GM12878 (cell line): ENCODE measurements at regions of chr3 and their contacts with region 1.

Region 1: GRCh38 chr3:94069194-94069813 is 6.4 kb downstream of the NSUN3 start:
- DNase-seq: no peak
- ATAC-seq: no peak
- H3K4me3 ChIP-seq: no peak overlapping the region
- H3K27ac ChIP-seq: peak overlapping the region; percentile 90; the same call in 1 of the 2 replicates
- H3K4me1 ChIP-seq: peaks cover 30% of the 10 kb centered on the region
- H3K27me3 ChIP-seq: no peaks in the 10 kb centered on the region
- CTCF ChIP-seq: peak in 2 of 3 experiments; percentile 18 to 34; a peak in 4 of 6 replicates
- EP300 ChIP-seq: no peak
- POLR2A ChIP-seq: no peak
- RAD21 ChIP-seq: peak; percentile 23; the same call in 1 of the 2 replicates

Region 2: DNA sequence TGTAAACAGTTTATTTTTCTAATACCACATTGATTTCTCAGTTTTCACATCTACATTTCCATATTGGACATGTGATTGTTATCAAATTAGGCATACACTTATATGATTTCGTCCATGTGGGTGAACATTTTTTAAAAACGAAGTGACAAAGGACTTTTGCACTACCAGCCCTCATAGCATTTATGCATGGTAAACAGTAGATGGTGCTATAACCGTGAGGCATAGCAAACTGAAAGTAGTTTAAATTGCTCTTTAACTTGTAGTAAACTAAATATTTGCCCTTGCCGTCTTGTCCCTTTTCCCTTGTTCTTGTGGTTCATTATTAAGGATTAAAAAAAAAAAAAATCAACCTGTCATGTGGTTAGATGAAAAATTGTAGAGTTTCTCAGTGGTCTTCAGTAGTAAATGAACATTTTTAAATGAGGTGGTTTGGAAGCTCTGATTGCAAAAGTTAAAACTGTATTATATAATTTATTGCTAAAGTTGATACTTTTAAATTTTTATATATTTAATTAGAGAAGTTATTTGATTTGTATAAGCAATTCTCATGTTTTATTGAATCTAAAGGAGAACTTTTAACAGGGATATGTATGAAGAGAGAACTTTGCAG is 64.9 kb before region 1 on chr3:
- CTCF ChIA-PET with region 1: interaction called, 164 read pairs
- POLR2A ChIA-PET with region 1: interaction called, 4 read pairs
- RAD21 ChIA-PET with region 1: interaction called, 21 read pairs
- SMC1A ChIA-PET with region 1: interaction called, 38 read pairs
- in situ Hi-C with region 1: loop called (anchors 5 kb)
- intact Hi-C with region 1: loop called (anchors 1 kb)
- DNase-seq: peak; percentile 44
- ATAC-seq: peak; percentile 92
- H3K4me3 ChIP-seq: no peak overlapping the region
- H3K27ac ChIP-seq: no peak overlapping the region; the same call in 1 of the 2 replicates
- H3K4me1 ChIP-seq: no peaks in the 10 kb centered on the region
- H3K27me3 ChIP-seq: no peaks in the 10 kb centered on the region
- CTCF ChIP-seq: peak; percentile 78 to 90 (median 84)
- EP300 ChIP-seq: no peak
- POLR2A ChIP-seq: no peak
- RAD21 ChIP-seq: peak; percentile 95

Region 3: DNA sequence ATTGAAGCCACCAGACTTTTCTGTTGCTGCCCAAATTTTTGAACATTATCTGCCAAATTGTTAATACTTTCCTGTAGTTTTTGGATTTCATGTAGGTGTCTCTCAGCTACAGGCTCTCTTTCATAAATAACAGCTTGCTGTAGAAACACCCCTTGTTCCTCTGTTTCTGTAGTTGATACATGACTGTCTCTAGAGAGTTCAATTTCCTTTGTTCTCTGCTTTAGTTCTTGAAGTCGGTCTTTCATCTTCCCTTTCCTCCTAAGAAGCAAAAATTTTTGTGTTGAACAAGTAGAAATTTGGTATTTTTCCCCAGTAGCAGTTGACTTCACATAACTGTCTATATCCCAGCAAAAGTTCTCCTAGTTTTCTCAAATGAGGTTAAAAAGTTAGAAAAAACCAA is 54.3 kb before region 1 on chr3:
- CTCF ChIA-PET with region 1: interaction called, 7 read pairs
- POLR2A ChIA-PET with region 1: no interaction called
- RAD21 ChIA-PET with region 1: interaction called, 6 read pairs
- SMC1A ChIA-PET with region 1: interaction called, 10 read pairs
- in situ Hi-C with region 1: no loop called
- intact Hi-C with region 1: no loop called
- DNase-seq: no peak
- ATAC-seq: no peak
- H3K4me3 ChIP-seq: no peak overlapping the region
- H3K27ac ChIP-seq: no peak overlapping the region
- H3K4me1 ChIP-seq: no peaks in the 10 kb centered on the region
- H3K27me3 ChIP-seq: no peaks in the 10 kb centered on the region
- CTCF ChIP-seq: no peak
- EP300 ChIP-seq: no peak
- POLR2A ChIP-seq: no peak
- RAD21 ChIP-seq: no peak

Region 4: DNA sequence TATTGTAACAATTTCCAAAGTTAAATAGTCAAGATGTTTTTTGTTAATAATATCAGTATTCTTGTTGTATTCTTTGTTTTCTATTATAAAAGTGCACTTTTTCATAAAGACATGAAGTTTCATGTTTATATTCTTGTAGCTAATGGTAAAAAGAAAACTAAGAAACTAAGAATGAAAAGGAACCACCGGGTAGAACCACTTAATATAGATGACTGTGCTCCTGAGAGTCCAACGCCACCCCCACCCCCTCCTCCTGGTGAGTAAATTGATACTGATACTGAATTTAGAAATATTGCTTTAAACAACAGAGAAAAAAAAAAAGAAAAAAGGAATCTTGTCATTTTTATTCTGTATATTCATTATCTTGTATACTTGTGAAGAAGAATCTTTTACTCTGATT is 20.0 kb before region 1 on chr3:
- CTCF ChIA-PET with region 1: interaction called, 17 read pairs
- POLR2A ChIA-PET with region 1: interaction called, 4 read pairs
- RAD21 ChIA-PET with region 1: interaction called, 4 read pairs
- SMC1A ChIA-PET with region 1: interaction called, 11 read pairs
- in situ Hi-C with region 1: no loop called
- intact Hi-C with region 1: no loop called
- DNase-seq: no peak
- ATAC-seq: no peak
- H3K4me3 ChIP-seq: no peak overlapping the region
- H3K27ac ChIP-seq: no peak overlapping the region
- H3K4me1 ChIP-seq: no peaks in the 10 kb centered on the region
- H3K27me3 ChIP-seq: no peaks in the 10 kb centered on the region
- CTCF ChIP-seq: no peak
- EP300 ChIP-seq: no peak
- POLR2A ChIP-seq: no peak
- RAD21 ChIP-seq: no peak

Region 5: GRCh38 chr3:94101851-94102250 is 32.5 kb after region 1 on chr3:
- CTCF ChIA-PET with region 1: interaction called, 17 read pairs
- POLR2A ChIA-PET with region 1: no interaction called
- RAD21 ChIA-PET with region 1: interaction called, 31 read pairs
- SMC1A ChIA-PET with region 1: interaction called, 21 read pairs
- in situ Hi-C with region 1: no loop called
- intact Hi-C with region 1: no loop called
- DNase-seq: no peak
- ATAC-seq: 0 out of 3 replicates have a peak, but pooled peaks have one; percentile 17
- H3K4me3 ChIP-seq: no peak overlapping the region
- H3K27ac ChIP-seq: no peak overlapping the region
- H3K4me1 ChIP-seq: no peaks in the 10 kb centered on the region
- H3K27me3 ChIP-seq: no peaks in the 10 kb centered on the region
- CTCF ChIP-seq: no peak; a peak in 1 of 6 replicates
- EP300 ChIP-seq: no peak
- POLR2A ChIP-seq: no peak
- RAD21 ChIP-seq: peak; percentile 22; the same call in 1 of the 2 replicates

Region 6: GRCh38 chr3:94433811-94434210 is 364.5 kb after region 1 on chr3:
- CTCF ChIA-PET with region 1: no interaction called
- POLR2A ChIA-PET with region 1: no interaction called
- RAD21 ChIA-PET with region 1: no interaction called
- SMC1A ChIA-PET with region 1: no interaction called
- in situ Hi-C with region 1: no loop called
- intact Hi-C with region 1: no loop called
- DNase-seq: no peak
- ATAC-seq: no peak
- H3K4me3 ChIP-seq: no peak overlapping the region
- H3K27ac ChIP-seq: no peak overlapping the region
- H3K4me1 ChIP-seq: no peaks in the 10 kb centered on the region
- H3K27me3 ChIP-seq: no peaks in the 10 kb centered on the region
- CTCF ChIP-seq: no peak
- EP300 ChIP-seq: no peak
- POLR2A ChIP-seq: no peak
- RAD21 ChIP-seq: no peak